HEK293 (cell line): ENCODE measurements at regions of chr12 and their contacts with region 1.

Region 1: DNA sequence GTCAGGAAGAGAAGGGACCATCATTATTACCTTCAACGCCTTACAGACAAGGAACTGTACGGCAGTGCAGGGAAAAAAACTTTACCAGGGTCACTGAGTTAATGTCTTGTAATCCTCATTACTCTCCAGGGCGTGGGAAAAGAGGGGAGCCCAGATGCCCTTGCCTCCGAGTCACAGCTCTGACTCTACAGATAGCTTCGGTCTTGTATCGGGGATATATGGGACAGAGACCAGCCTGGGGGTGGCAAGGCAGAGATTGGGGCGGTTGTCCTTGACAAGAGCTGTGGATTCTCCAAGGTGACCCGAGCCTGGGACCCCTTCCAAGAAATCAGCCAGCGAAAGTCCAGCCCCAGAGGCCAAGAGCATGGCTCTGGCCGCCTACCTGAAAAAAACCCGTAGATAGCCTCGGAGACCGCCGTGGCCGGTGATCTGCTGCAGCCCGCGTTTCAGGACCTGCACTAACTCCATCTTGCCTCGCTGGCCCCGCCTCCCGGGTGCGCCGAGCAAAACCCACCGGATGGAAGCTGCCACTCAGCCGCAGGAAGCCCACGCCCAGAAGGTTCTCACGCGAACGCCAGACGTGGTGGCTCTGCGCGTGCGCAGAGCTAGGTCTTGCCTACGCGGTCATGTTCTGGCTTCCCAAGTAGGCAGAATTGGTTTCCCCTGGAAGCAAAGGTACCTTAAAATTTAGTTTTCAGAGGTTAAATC is at the start of gene NDUFA12:
- H3K4me3 ChIP-seq: peak within 1 kb of the TSS; percentile 98
- H3K27ac ChIP-seq: peak within 1 kb of the TSS; percentile 69
- H3K4me1 ChIP-seq: no peaks in the 10 kb centered on the region; the same call in 1 of the 2 replicates
- CTCF ChIP-seq: no peak

Region 2: GRCh38 chr12:94640134-94640928 is 363.0 kb before region 1 on chr12:
- CTCF ChIA-PET with region 1: no interaction called
- POLR2A ChIA-PET with region 1: no interaction called
- H3K4me3 ChIP-seq: no peak overlapping the region
- H3K27ac ChIP-seq: no peak overlapping the region
- H3K4me1 ChIP-seq: peaks cover 3% of the 10 kb centered on the region
- CTCF ChIP-seq: no peak

Region 3: GRCh38 chr12:94980577-94980976 is 22.8 kb before region 1 on chr12:
- CTCF ChIA-PET with region 1: no interaction called
- POLR2A ChIA-PET with region 1: interaction called, 10 read pairs
- H3K4me3 ChIP-seq: no peak overlapping the region
- H3K27ac ChIP-seq: no peak overlapping the region
- H3K4me1 ChIP-seq: no peaks in the 10 kb centered on the region
- CTCF ChIP-seq: 0 out of 2 replicates have a peak, but pooled peaks have one; percentile 16

Region 4: DNA sequence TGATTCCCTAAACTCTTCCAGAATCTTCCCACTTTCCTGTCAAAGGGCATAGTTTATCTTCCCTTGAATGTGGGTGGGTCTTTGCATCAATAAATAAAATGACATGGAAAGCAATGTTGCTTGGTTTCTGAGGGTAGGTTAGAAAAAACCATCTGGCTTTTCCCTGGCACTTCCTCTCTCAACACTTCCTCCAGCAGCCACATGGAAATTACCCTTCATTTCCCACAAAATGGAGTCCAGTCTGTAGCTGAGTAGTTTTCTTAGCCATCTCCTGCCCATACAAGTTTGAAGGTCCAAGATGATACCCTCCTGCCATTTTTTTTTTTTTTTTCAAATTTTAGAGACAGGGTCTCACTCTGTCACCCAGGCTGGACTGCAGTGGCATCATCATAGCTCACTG is 11.2 kb after region 1 on chr12:
- CTCF ChIA-PET with region 1: no interaction called
- POLR2A ChIA-PET with region 1: interaction called, 10 read pairs
- H3K4me3 ChIP-seq: no peak overlapping the region
- H3K27ac ChIP-seq: no peak overlapping the region
- H3K4me1 ChIP-seq: no peaks in the 10 kb centered on the region
- CTCF ChIP-seq: no peak